ENCODE measurements at regions of chr13 and their contacts with region 1.

Region 1: GRCh38 chr13:37106642-37107041 is 1.2 kb upstream of the CSNK1A1L start:
- DNase-seq: no peak
- ATAC-seq: no peak
- H3K4me3 ChIP-seq: no peak overlapping the region
- H3K27ac ChIP-seq: no peak overlapping the region
- H3K4me1 ChIP-seq: no peaks in the 10 kb centered on the region
- H3K27me3 ChIP-seq: no peaks in the 10 kb centered on the region
- CTCF ChIP-seq: no peak

Region 2: GRCh38 chr13:36954542-36954941 is 152.1 kb before region 1 on chr13:
- intact Hi-C with region 1: no loop called
- DNase-seq: no peak
- ATAC-seq: no peak
- H3K4me3 ChIP-seq: no peak overlapping the region
- H3K27ac ChIP-seq: no peak overlapping the region
- H3K4me1 ChIP-seq: no peaks in the 10 kb centered on the region
- H3K27me3 ChIP-seq: no peaks in the 10 kb centered on the region
- CTCF ChIP-seq: no peak

Region 3: GRCh38 chr13:37602747-37603381 is 496.2 kb after region 1 on chr13:
- intact Hi-C with region 1: loop called in 1 of 2 experiments (anchors 2 kb)
- DNase-seq: no peak
- ATAC-seq: no peak
- H3K4me3 ChIP-seq: no peak overlapping the region
- H3K27ac ChIP-seq: no peak overlapping the region
- H3K4me1 ChIP-seq: no peaks in the 10 kb centered on the region
- H3K27me3 ChIP-seq: no peaks in the 10 kb centered on the region
- CTCF ChIP-seq: peak; percentile 45

Measured in psoas muscle (tissue), 8 donors.